CD8-positive, alpha-beta T cell (primary cell): ENCODE measurements at regions of chr9 and their contacts with region 1.

Region 1: GRCh38 chr9:137723783-137724445 is 105.1 kb downstream of the EHMT1 start:
- DNase-seq: peak in 2 of 9 experiments; percentile 11 to 21
- ATAC-seq: peak; percentile 10
- H3K4me3 ChIP-seq: no peak overlapping the region
- H3K4me3 Mint-ChIP-seq: peak overlapping the region; percentile 5
- H3K27ac ChIP-seq: peak overlapping the region in 1 of 2 experiments; percentile 68
- H3K27ac Mint-ChIP-seq: peak overlapping the region; percentile 92
- H3K4me1 ChIP-seq: peaks cover 33% of the 10 kb centered on the region
- H3K4me1 Mint-ChIP-seq: peaks cover 51% of the 10 kb centered on the region
- H3K27me3 ChIP-seq: no peaks in the 10 kb centered on the region
- H3K27me3 Mint-ChIP-seq: no peaks in the 10 kb centered on the region
- CTCF ChIP-seq: no peak

Region 2: GRCh38 chr9:137772281-137772873 is 48.5 kb after region 1 on chr9:
- CTCF ChIA-PET with region 1: no interaction called
- POLR2A ChIA-PET with region 1: no interaction called
- intact Hi-C with region 1: loop called in 1 of 2 experiments (anchors 1 kb)
- DNase-seq: no peak
- ATAC-seq: no peak
- H3K4me3 ChIP-seq: no peak overlapping the region
- H3K4me3 Mint-ChIP-seq: no peak overlapping the region
- H3K27ac ChIP-seq: no peak overlapping the region
- H3K27ac Mint-ChIP-seq: peak overlapping the region; percentile 29
- H3K4me1 ChIP-seq: no peaks in the 10 kb centered on the region
- H3K4me1 Mint-ChIP-seq: peaks cover 1% of the 10 kb centered on the region
- H3K27me3 ChIP-seq: no peaks in the 10 kb centered on the region
- H3K27me3 Mint-ChIP-seq: no peaks in the 10 kb centered on the region
- CTCF ChIP-seq: no peak

Region 3: DNA sequence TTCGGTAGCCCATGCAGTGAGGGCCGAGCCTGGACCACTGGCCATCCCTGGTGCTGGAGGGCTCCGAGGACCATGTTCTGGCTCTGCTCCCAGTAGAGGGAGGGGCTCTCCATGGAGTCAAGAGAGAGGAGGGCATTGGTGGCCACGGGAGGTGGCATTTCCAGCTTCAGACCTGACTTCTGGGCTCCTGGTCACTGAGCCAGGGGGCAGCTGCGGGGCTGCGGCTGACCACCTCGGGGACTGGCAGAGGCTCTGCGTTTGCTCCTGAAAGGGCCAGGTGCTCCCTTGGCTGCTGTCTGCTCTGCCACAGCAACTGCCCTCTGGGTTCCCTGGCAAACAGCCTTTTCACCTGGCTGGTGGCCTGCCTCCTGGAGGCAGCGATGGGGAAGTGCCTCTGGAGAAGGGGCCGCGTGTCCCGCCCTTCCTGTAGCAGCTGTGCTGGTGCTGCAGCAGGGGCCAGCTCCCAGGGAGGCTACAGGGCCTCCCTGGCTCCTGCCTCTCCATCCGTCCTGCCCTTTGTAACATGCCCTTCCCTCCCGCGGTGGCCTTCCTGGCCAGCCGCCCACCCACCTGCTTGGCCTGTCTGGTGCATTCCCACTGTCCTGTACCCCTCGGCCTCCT is 298.3 kb after region 1 on chr9:
- CTCF ChIA-PET with region 1: no interaction called
- POLR2A ChIA-PET with region 1: no interaction called
- intact Hi-C with region 1: loop called in 1 of 2 experiments (anchors 10 kb)
- DNase-seq: peak in 1 of 9 experiments; percentile 9
- ATAC-seq: no peak
- H3K4me3 ChIP-seq: no peak overlapping the region
- H3K4me3 Mint-ChIP-seq: no peak overlapping the region
- H3K27ac ChIP-seq: no peak overlapping the region
- H3K27ac Mint-ChIP-seq: no peak overlapping the region
- H3K4me1 ChIP-seq: no peaks in the 10 kb centered on the region
- H3K4me1 Mint-ChIP-seq: no peaks in the 10 kb centered on the region
- H3K27me3 ChIP-seq: peaks cover 0 to 5% of the 10 kb centered on the region in 2 experiments
- H3K27me3 Mint-ChIP-seq: peaks cover 24% of the 10 kb centered on the region
- CTCF ChIP-seq: no peak